Caco-2 (cell line): ENCODE measurements at regions of chr1 and their contacts with region 1.

Region 1: GRCh38 chr1:198276672-198277071 is 119.9 kb downstream of the NEK7 start:
- DNase-seq: no peak
- H3K4me3 ChIP-seq: no peak overlapping the region
- H3K4me3 Mint-ChIP-seq: no peak overlapping the region
- H3K27ac Mint-ChIP-seq: no peak overlapping the region
- H3K4me1 ChIP-seq: peaks cover 23% of the 10 kb centered on the region
- H3K4me1 Mint-ChIP-seq: peaks cover 7% of the 10 kb centered on the region
- H3K27me3 ChIP-seq: no peaks in the 10 kb centered on the region
- H3K27me3 Mint-ChIP-seq: no peaks in the 10 kb centered on the region
- CTCF ChIP-seq: peak in 1 of 2 experiments; percentile 11

Region 2: DNA sequence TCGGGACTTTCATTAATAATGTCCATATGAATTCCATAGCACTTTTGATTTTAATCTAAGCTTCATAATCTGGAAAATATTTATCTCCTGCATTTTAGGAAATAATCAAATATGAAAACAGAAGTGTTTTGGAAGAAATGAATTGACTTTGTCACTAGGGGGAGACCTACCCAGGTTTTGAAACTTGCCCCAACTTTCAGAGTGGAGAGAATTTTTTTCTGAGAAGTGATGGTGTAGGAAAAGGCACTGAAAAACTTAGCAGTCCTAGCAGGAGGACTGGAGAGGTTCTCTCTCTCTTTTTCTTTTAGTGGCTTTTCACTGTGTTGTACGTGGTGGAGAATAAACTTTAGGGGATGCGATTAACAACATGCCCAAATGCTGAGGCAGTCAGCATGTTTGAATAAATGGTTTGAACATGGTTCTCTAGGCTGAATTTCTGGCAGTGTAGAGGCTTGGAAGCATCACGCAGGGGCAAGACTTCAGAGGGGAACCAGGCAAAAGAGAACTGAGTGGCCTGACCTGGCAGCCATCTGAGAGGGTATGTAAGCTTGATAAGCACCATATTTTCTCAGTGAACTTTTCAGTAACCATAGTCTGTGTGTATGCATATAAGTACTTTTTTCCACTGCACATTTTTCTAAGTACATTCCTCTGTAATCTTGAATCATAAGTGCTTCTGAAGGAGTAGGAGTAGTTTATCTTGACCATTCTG is 188.2 kb before region 1 on chr1:
- CTCF ChIA-PET with region 1: no interaction called
- POLR2A ChIA-PET with region 1: no interaction called
- intact Hi-C with region 1: loop called (anchors 1 kb)
- DNase-seq: peak in 1 of 2 experiments; percentile 50
- H3K4me3 ChIP-seq: no peak overlapping the region
- H3K4me3 Mint-ChIP-seq: peak overlapping the region; percentile 52
- H3K27ac Mint-ChIP-seq: no peak overlapping the region
- H3K4me1 ChIP-seq: peaks cover 6% of the 10 kb centered on the region; the same call in 1 of the 2 replicates
- H3K4me1 Mint-ChIP-seq: peaks cover 12% of the 10 kb centered on the region
- H3K27me3 ChIP-seq: no peaks in the 10 kb centered on the region
- H3K27me3 Mint-ChIP-seq: no peaks in the 10 kb centered on the region
- CTCF ChIP-seq: peak; percentile 67 to 70